Dorsolateral prefrontal cortex (tissue), 120 donors: ENCODE measurements at regions of chr19 and their contacts with region 1.

Region 1: DNA sequence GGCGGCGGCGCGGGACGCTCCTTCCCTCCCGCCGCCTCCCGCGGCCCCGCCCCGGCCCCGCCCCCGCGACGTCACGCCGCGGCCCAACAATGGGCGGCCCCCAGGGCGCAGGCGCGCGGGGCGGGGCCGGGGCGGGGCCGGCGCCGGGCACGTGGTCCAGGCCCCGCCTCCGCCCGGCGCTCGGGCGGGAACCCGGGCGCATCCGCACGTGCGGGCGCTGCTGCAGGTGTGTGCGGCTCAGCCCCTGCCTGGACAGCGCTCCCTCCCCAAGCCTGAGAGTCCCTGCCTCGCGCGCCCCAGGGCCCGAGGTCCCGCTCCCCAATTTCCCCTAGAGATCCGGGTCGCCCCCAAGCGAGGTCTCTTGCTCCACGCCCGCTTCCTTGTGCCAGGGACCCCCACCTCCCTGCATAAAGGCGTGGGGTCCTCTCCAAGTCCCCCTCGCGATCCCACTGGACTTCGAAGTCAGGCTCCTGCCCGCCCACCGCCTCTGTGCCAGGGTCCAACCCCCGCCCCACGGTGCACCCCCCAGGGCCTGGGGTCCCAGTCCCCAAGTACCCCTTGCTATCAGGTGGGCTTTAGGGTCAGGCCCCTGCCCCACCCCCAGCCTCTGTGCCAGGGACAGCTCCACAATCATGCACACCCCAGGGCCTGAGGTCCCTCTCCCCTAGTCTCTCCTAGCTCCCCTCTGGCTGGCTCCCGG is at the start of gene MEX3D:
- DNase-seq: peak in 8 of 10 donors; percentile 21 to 76 (median 52)
- H3K4me3 ChIP-seq: peak within 1 kb of the TSS; percentile 58 to 87 (median 73)
- H3K27ac ChIP-seq: peak within 1 kb of the TSS in 56 of 59 donors; percentile 53 to 97 (median 91)
- H3K27me3 ChIP-seq: no peaks in the 10 kb centered on the region
- CTCF ChIP-seq: no peak
- total RNA-seq, gene MEX3D: 12.9 to 38.7 (median 20.5) TPM

Region 2: DNA sequence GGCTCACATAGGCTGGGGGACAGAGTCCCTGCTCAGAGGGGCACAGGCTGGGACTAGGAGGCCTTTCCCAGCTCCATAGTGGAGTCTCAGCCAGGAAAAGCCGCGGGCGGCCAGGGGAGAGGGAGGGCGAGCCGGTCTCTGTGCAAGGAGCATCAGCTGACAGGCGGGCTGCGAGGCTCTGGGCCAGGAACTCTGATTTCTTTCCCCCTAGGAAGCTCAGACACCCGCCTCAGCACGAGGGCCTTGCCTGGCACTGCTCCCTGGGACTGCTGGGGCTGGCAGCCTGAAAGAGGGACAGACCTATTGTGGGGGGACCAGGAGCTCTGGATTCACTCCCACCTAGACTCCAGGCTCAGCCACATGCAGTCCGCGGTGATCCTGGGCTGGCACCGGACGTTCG is 46.8 kb before region 1 on chr19:
- intact Hi-C with region 1: no loop called
- DNase-seq: peak in 7 of 10 donors; percentile 33 to 90 (median 60)
- H3K4me3 ChIP-seq: no peak overlapping the region
- H3K27ac ChIP-seq: peak overlapping the region in 30 of 59 donors; percentile 18 to 87 (median 50)
- H3K27me3 ChIP-seq: peaks cover 0 to 38% (median 11%) of the 10 kb centered on the region in 45 donors
- CTCF ChIP-seq: no peak

Region 3: DNA sequence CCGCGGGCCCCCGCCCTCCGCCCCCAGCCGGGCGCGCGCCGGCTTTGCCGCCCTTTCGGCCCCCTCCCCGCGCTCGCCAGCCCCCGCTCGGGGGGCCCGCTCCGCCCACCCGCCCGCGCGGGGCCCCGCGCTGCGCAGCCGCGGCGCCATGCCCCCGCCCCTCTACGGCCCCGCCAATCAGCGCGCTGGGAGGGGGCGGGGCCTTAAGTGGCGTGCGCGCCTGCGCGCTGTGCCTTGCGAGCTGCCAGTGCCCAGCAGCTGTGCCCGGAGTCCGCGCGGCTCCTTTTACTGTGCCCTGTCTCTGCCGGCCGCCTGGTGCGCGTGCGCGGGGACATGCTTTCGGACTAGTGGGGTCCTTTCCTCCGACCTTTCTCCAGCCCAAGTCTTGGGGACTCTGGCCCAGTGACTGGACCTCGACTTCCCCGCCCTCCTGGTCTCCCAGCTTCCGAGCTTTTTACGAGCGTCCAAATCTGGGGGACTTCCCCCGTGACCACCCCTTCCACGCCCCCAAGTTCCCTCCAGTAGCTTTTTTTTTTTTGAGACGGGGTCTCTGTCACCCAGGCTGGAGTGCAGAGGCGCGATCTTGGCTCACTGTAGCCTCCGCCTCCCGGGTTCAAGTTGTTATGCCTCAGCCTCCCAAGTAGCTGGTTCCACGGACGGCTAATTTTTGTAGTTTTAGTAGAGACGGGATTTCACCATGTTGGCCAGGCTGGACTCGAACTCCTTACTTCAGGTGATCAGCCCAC is 24.5 kb after region 1 on chr19 and contains the start of gene MBD3:
- intact Hi-C with region 1: loop called (anchors 1 to 2 kb)
- DNase-seq: peak; percentile 89 to 96 (median 94)
- H3K4me3 ChIP-seq: peak within 1 kb of the TSS; percentile 61 to 94 (median 84)
- H3K27ac ChIP-seq: peak within 1 kb of the TSS; percentile 41 to 98 (median 93)
- H3K27me3 ChIP-seq: no peaks in the 10 kb centered on the region
- CTCF ChIP-seq: peak in 25 of 56 donors; percentile 7 to 44 (median 24)
- total RNA-seq, gene MBD3: 59.7 to 192 (median 85.4) TPM

Region 4: GRCh38 chr19:1652471-1653299 is 84.2 kb after region 1 on chr19 and contains the start of gene TCF3:
- intact Hi-C with region 1: loop called in 1 of 2 experiments (anchors 5 kb)
- DNase-seq: peak; percentile 97 to 99 (median 99)
- H3K4me3 ChIP-seq: peak within 1 kb of the TSS; percentile 65 to 89 (median 78)
- H3K27ac ChIP-seq: peak within 1 kb of the TSS; percentile 96 to 100 (median 99)
- H3K27me3 ChIP-seq: no peaks in the 10 kb centered on the region
- CTCF ChIP-seq: peak in 18 of 56 donors; percentile 7 to 47 (median 22)
- total RNA-seq, gene TCF3: 15.2 to 51.5 (median 25.4) TPM